SK-N-SH (cell line): ENCODE measurements at regions of chr17 and their contacts with region 1.

Region 1: DNA sequence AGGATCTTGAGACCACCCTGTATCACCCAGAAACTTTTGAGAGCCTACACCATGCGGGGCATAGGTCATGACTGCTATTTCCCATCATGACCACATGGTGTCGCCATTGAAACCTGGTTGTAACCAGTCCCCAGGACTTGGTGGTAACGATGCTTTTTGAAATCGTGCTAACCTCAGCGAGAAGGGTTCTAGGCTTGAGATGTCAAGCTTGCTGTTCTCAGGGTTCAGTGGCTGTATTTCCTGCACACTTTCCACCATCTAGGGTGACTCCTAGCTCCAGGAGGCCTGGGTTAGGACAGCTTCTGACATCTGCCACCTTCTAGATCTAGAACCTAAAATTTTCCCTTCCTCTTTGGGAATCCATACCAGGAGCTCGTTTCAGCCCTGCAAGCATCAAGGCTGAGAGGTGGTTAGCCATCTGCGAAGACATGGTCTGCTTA is 13.0 kb upstream of the SPNS3 start:
- DNase-seq: peak; percentile 81
- H3K4me3 ChIP-seq: no peak overlapping the region; a peak in 1 of 4 replicates
- H3K27ac ChIP-seq: no peak overlapping the region
- H3K4me1 ChIP-seq: peaks cover 0 to 2% of the 10 kb centered on the region in 2 experiments; a peak in 1 of 4 replicates
- H3K27me3 ChIP-seq: no peaks in the 10 kb centered on the region
- CTCF ChIP-seq: peak; percentile 78
- EP300 ChIP-seq: no peak
- RAD21 ChIP-seq: peak; percentile 91

Region 2: GRCh38 chr17:4199818-4200402 is 220.8 kb before region 1 on chr17:
- CTCF ChIA-PET with region 1: interaction called, 11 read pairs
- POLR2A ChIA-PET with region 1: no interaction called
- DNase-seq: peak; percentile 77
- H3K4me3 ChIP-seq: no peak overlapping the region
- H3K27ac ChIP-seq: no peak overlapping the region
- H3K4me1 ChIP-seq: peaks cover 0 to 6% of the 10 kb centered on the region in 2 experiments; a peak in 1 of 4 replicates
- H3K27me3 ChIP-seq: no peaks in the 10 kb centered on the region
- CTCF ChIP-seq: peak; percentile 83
- EP300 ChIP-seq: no peak
- RAD21 ChIP-seq: peak; percentile 56

Region 3: DNA sequence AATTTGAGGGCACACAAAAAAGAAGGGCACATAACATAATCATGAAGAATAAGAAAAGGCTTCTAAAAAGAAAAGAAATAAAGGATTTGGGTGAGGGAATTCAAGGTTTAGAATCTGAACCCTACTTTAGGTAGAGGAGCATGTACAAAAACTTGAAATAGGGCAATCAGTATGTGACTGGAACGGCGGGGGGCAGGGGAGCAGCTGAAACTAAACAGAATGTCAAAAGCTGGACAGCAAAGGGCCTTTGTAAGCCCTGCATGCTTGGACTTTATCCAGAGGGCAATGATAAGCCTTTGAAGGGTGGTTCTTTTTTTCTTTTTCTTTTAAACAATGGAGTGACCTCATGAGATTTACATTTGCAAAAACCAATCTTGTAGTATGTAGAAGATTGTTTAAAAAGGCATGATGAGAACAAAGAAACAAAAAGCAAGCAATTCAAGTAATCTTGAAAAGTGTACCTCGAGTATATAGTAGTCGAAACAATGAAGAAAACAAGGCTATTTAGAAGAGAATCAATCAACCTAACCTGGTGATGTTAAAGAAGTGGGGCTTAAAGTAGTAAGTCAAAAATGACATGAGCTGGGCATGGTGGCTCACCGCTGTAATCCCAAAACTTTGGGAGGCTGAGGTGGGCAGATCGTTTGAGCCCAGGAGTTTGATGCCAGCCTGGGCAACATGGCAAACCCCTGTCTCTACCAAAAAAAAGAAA is 110.2 kb before region 1 on chr17:
- CTCF ChIA-PET with region 1: no interaction called
- POLR2A ChIA-PET with region 1: no interaction called
- DNase-seq: no peak
- H3K4me3 ChIP-seq: no peak overlapping the region
- H3K27ac ChIP-seq: no peak overlapping the region
- H3K4me1 ChIP-seq: peaks cover 0 to 6% of the 10 kb centered on the region in 2 experiments; a peak in 3 of 4 replicates
- H3K27me3 ChIP-seq: no peaks in the 10 kb centered on the region
- CTCF ChIP-seq: no peak
- EP300 ChIP-seq: no peak
- RAD21 ChIP-seq: no peak

Region 4: GRCh38 chr17:4407851-4408250 is 12.9 kb before region 1 on chr17:
- CTCF ChIA-PET with region 1: interaction called, 11 read pairs
- POLR2A ChIA-PET with region 1: no interaction called
- DNase-seq: no peak
- H3K4me3 ChIP-seq: no peak overlapping the region
- H3K27ac ChIP-seq: no peak overlapping the region
- H3K4me1 ChIP-seq: no peaks in the 10 kb centered on the region
- H3K27me3 ChIP-seq: no peaks in the 10 kb centered on the region
- CTCF ChIP-seq: no peak
- EP300 ChIP-seq: no peak
- RAD21 ChIP-seq: no peak

Region 5: GRCh38 chr17:4436846-4437245 is 16.1 kb after region 1 on chr17:
- CTCF ChIA-PET with region 1: interaction called, 15 read pairs
- POLR2A ChIA-PET with region 1: no interaction called
- DNase-seq: no peak
- H3K4me3 ChIP-seq: no peak overlapping the region
- H3K27ac ChIP-seq: no peak overlapping the region
- H3K4me1 ChIP-seq: peaks cover 0 to 10% of the 10 kb centered on the region in 2 experiments; a peak in 1 of 4 replicates
- H3K27me3 ChIP-seq: no peaks in the 10 kb centered on the region
- CTCF ChIP-seq: no peak
- EP300 ChIP-seq: no peak
- RAD21 ChIP-seq: no peak

Region 6: GRCh38 chr17:4492721-4493561 is 72.2 kb after region 1 on chr17:
- CTCF ChIA-PET with region 1: interaction called, 13 read pairs
- POLR2A ChIA-PET with region 1: no interaction called
- DNase-seq: no peak
- H3K4me3 ChIP-seq: no peak overlapping the region
- H3K27ac ChIP-seq: no peak overlapping the region
- H3K4me1 ChIP-seq: no peaks in the 10 kb centered on the region
- H3K27me3 ChIP-seq: peaks cover 3% of the 10 kb centered on the region; the same call in 1 of the 2 replicates
- CTCF ChIP-seq: no peak
- EP300 ChIP-seq: no peak
- RAD21 ChIP-seq: no peak

Region 7: GRCh38 chr17:4499431-4500187 is 78.9 kb after region 1 on chr17:
- CTCF ChIA-PET with region 1: interaction called, 10 read pairs
- POLR2A ChIA-PET with region 1: no interaction called
- DNase-seq: peak; percentile 75
- H3K4me3 ChIP-seq: no peak overlapping the region
- H3K27ac ChIP-seq: no peak overlapping the region
- H3K4me1 ChIP-seq: peaks cover 0 to 3% of the 10 kb centered on the region in 2 experiments; a peak in 1 of 4 replicates
- H3K27me3 ChIP-seq: peaks cover 35% of the 10 kb centered on the region
- CTCF ChIP-seq: no peak
- EP300 ChIP-seq: no peak
- RAD21 ChIP-seq: no peak

Region 8: GRCh38 chr17:4625181-4625617 is 204.5 kb after region 1 on chr17:
- CTCF ChIA-PET with region 1: interaction called, 12 read pairs
- POLR2A ChIA-PET with region 1: no interaction called
- DNase-seq: no peak
- H3K4me3 ChIP-seq: no peak overlapping the region
- H3K27ac ChIP-seq: no peak overlapping the region
- H3K4me1 ChIP-seq: no peaks in the 10 kb centered on the region
- H3K27me3 ChIP-seq: peaks cover 18% of the 10 kb centered on the region; the same call in 1 of the 2 replicates
- CTCF ChIP-seq: no peak
- EP300 ChIP-seq: no peak
- RAD21 ChIP-seq: no peak